ENCODE measurements at regions of chr1 and their contacts with region 1.

Region 1: GRCh38 chr1:52365746-52366516 is at the start of gene CC2D1B:
- DNase-seq: peak; percentile 99
- H3K4me3 Mint-ChIP-seq: peak within 1 kb of the TSS; percentile 97
- H3K27ac Mint-ChIP-seq: peak within 1 kb of the TSS; percentile 88
- H3K4me1 Mint-ChIP-seq: peaks cover 46% of the 10 kb centered on the region
- H3K27me3 Mint-ChIP-seq: no peaks in the 10 kb centered on the region
- total RNA-seq, gene CC2D1B: 18.4 to 21.8 TPM

Region 2: GRCh38 chr1:51519048-51519864 is 846.7 kb before region 1 on chr1 and contains the start of gene EPS15:
- CTCF ChIA-PET with region 1: no interaction called
- intact Hi-C with region 1: loop called (anchors 5 kb)
- DNase-seq: peak; percentile 89
- H3K4me3 Mint-ChIP-seq: peak within 1 kb of the TSS; percentile 87
- H3K27ac Mint-ChIP-seq: peak within 1 kb of the TSS; percentile 84
- H3K4me1 Mint-ChIP-seq: peaks cover 47% of the 10 kb centered on the region
- H3K27me3 Mint-ChIP-seq: no peaks in the 10 kb centered on the region
- total RNA-seq, gene EPS15: 56.0 to 57.0 TPM

Region 3: DNA sequence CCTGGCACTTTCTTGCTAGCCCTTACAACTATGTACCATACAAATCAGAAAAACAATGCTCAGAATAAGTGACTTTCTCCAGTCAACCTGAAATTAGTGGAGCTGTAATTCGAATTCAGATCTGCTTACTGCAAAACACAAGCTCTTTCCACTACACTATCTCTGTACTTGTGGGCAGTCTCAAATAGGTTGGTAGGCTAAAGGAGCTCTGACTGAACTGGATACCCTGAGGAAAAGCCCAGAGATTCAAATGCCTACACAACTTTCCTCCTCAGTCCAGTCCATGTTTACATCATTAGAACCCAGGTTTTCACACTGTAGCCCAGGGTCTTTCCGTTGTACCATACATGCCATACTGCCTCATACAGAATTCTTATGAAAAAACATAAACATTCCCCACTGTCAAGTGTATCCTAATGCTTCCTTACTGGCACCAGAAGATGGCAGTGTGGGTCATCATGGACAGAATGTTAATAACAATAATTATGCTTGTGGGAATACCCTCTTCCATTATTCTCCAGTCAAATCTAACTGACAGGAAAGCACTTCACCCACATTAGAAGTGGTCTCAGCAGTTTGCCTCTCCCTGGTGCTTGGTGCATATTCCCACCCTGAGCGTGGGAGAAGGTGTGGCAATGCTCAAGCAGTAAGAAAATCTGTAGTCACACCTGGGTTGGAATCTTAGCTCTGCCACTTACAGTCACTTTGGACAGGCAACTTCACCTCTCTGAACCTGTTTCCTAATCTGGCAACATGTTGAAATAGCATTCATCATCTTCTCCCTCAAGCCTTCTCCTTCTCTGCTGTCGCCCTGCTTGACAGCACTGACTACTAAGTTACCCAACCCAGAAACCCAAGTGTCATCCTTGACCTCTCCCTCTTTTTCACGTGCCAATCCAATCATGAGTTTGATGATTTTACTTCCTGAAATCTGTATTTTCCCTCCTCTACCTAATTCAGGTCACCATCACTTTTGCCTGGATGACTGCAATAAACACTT is 238.4 kb before region 1 on chr1:
- CTCF ChIA-PET with region 1: interaction called, 4 read pairs
- intact Hi-C with region 1: loop called (anchors 5 kb)
- DNase-seq: peak; percentile 59
- H3K4me3 Mint-ChIP-seq: no peak overlapping the region
- H3K27ac Mint-ChIP-seq: no peak overlapping the region
- H3K4me1 Mint-ChIP-seq: peaks cover 16% of the 10 kb centered on the region
- H3K27me3 Mint-ChIP-seq: peaks cover 11% of the 10 kb centered on the region

Region 4: GRCh38 chr1:52404116-52404986 is 38.4 kb after region 1 on chr1 and contains the starts of genes ORC1 and PRPF38A:
- CTCF ChIA-PET with region 1: interaction called, 5 read pairs
- intact Hi-C with region 1: loop called (anchors 1 kb)
- DNase-seq: peak; percentile 99
- H3K4me3 Mint-ChIP-seq: peak within 1 kb of the TSS; percentile 100
- H3K27ac Mint-ChIP-seq: peak within 1 kb of the TSS; percentile 99
- H3K4me1 Mint-ChIP-seq: peaks cover 45% of the 10 kb centered on the region
- H3K27me3 Mint-ChIP-seq: no peaks in the 10 kb centered on the region
- total RNA-seq, gene ORC1: 46.9 to 49.3 TPM
- total RNA-seq, gene PRPF38A: 86.0 to 91.8 TPM

Region 5: GRCh38 chr1:52552505-52553361 is 186.8 kb after region 1 on chr1 and contains the start of gene TUT4:
- CTCF ChIA-PET with region 1: no interaction called
- intact Hi-C with region 1: loop called (anchors 1 kb)
- DNase-seq: peak; percentile 88
- H3K4me3 Mint-ChIP-seq: peak within 1 kb of the TSS; percentile 50
- H3K27ac Mint-ChIP-seq: no peak within 1 kb of the TSS
- H3K4me1 Mint-ChIP-seq: peaks cover 31% of the 10 kb centered on the region
- H3K27me3 Mint-ChIP-seq: no peaks in the 10 kb centered on the region
- total RNA-seq, gene TUT4: 48.1 to 51.2 TPM

Region 6: GRCh38 chr1:52686830-52687229 is 320.9 kb after region 1 on chr1:
- CTCF ChIA-PET with region 1: interaction called, 4 read pairs
- intact Hi-C with region 1: loop called (anchors 1 kb)
- DNase-seq: no peak
- H3K4me3 Mint-ChIP-seq: no peak overlapping the region
- H3K27ac Mint-ChIP-seq: no peak overlapping the region
- H3K4me1 Mint-ChIP-seq: peaks cover 9% of the 10 kb centered on the region
- H3K27me3 Mint-ChIP-seq: no peaks in the 10 kb centered on the region

Region 7: GRCh38 chr1:53196485-53197270 is 830.7 kb after region 1 on chr1 and contains the start of gene CPT2:
- CTCF ChIA-PET with region 1: no interaction called
- intact Hi-C with region 1: loop called (anchors 1 kb)
- DNase-seq: peak; percentile 94
- H3K4me3 Mint-ChIP-seq: peak within 1 kb of the TSS; percentile 96
- H3K27ac Mint-ChIP-seq: peak within 1 kb of the TSS; percentile 97
- H3K4me1 Mint-ChIP-seq: peaks cover 21% of the 10 kb centered on the region
- H3K27me3 Mint-ChIP-seq: no peaks in the 10 kb centered on the region
- total RNA-seq, gene CPT2: 11.3 to 13.8 TPM

Measured in activated naive CD4-positive, alpha-beta T cell treated with anti-CD3 and anti-CD28 coated beads for 36 hours (primary cell).